ENCODE measurements at regions of chr2 and their contacts with region 1.

Region 1: GRCh38 chr2:65436169-65436823 is 3.9 kb upstream of the SPRED2 start:
- DNase-seq: peak; percentile 81
- H3K4me3 ChIP-seq: peak overlapping the region; percentile 66
- CTCF ChIP-seq: no peak

Region 2: DNA sequence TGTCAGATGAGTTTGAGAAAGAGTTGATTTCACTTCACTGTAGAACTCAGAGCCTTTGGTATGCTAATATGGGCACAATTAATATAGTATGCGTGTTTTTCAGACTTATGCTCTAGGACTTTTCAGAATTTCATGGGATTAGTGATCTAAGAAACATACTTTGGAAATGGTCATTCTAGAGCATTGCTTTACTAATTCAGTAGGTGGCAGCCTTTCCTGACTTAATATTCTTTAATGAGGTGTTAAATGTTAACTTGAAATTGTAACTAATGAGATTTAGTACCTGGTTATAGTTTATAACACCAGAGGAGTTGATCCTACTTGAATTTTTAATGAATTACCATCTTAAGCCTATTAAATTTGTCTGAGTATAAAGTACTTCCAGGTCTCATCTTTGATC is 180.2 kb before region 1 on chr2:
- CTCF ChIA-PET with region 1: no interaction called
- POLR2A ChIA-PET with region 1: no interaction called
- DNase-seq: no peak
- H3K4me3 ChIP-seq: no peak overlapping the region
- CTCF ChIP-seq: no peak

Region 3: GRCh38 chr2:65300761-65301711 is 135.3 kb before region 1 on chr2:
- CTCF ChIA-PET with region 1: interaction called, 4 read pairs
- POLR2A ChIA-PET with region 1: interaction called, 21 read pairs
- DNase-seq: peak; percentile 77
- H3K4me3 ChIP-seq: peak overlapping the region; percentile 39
- CTCF ChIP-seq: no peak

Region 4: GRCh38 chr2:65366595-65367125 is 69.6 kb before region 1 on chr2:
- CTCF ChIA-PET with region 1: no interaction called
- POLR2A ChIA-PET with region 1: interaction called, 11 read pairs
- DNase-seq: peak; percentile 91
- H3K4me3 ChIP-seq: peak overlapping the region; percentile 49
- CTCF ChIP-seq: no peak

Region 5: GRCh38 chr2:65411056-65411795 is 25.1 kb before region 1 on chr2:
- CTCF ChIA-PET with region 1: no interaction called
- POLR2A ChIA-PET with region 1: no interaction called
- DNase-seq: no peak
- H3K4me3 ChIP-seq: no peak overlapping the region
- CTCF ChIP-seq: no peak

Measured in AG04449 (cell line).